CD14-positive monocyte (primary cell): ENCODE measurements at regions of chr19 and their contacts with region 1.

Region 1: GRCh38 chr19:1672038-1672768 is 19.8 kb upstream of the TCF3 start:
- DNase-seq: peak in 1 of 3 donors; percentile 40
- H3K4me3 ChIP-seq: peak overlapping the region in 1 of 3 experiments; percentile 57
- H3K4me3 Mint-ChIP-seq: peak overlapping the region; percentile 31 to 53
- H3K27ac ChIP-seq: no peak overlapping the region
- H3K27ac Mint-ChIP-seq: no peak overlapping the region
- H3K4me1 ChIP-seq: peaks cover 17 to 23% of the 10 kb centered on the region in 2 donors
- H3K4me1 Mint-ChIP-seq: peaks cover 18% of the 10 kb centered on the region
- H3K27me3 ChIP-seq: peaks cover 14 to 80% of the 10 kb centered on the region in 2 donors
- H3K27me3 Mint-ChIP-seq: peaks cover 64 to 93% (median 64%) of the 10 kb centered on the region in 3 donors
- CTCF ChIP-seq: peak; percentile 98

Region 2: DNA sequence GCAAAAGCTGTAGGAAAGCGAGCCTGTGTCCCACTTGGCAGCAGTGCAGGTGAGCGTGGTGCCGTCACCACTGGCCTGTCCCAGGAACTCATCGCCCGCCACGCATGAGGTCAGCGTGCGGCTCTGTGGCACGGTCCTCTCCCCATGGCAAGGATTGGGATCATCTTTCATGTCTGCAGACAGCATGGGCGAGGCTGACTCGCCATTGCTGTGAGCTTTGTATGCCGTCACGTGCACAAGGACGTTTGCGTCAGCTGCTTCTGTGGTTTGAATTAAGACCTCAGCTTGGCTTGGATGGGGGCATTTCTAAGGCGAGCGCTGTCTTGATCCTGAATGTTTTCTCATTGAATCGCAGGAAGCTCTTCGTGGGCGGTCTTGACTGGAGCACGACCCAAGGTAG is 255.1 kb before region 1 on chr19:
- intact Hi-C with region 1: no loop called
- DNase-seq: no peak
- H3K4me3 ChIP-seq: no peak overlapping the region
- H3K4me3 Mint-ChIP-seq: no peak overlapping the region
- H3K27ac ChIP-seq: peak overlapping the region in 1 of 2 donors; percentile 78
- H3K27ac Mint-ChIP-seq: peak overlapping the region in 4 of 7 donors; percentile 10 to 69 (median 30)
- H3K4me1 ChIP-seq: peaks cover 19 to 21% of the 10 kb centered on the region in 2 donors
- H3K4me1 Mint-ChIP-seq: peaks cover 24% of the 10 kb centered on the region
- H3K27me3 ChIP-seq: no peaks in the 10 kb centered on the region
- H3K27me3 Mint-ChIP-seq: peaks cover 0 to 1% (median 0%) of the 10 kb centered on the region in 3 donors
- CTCF ChIP-seq: no peak

Region 3: DNA sequence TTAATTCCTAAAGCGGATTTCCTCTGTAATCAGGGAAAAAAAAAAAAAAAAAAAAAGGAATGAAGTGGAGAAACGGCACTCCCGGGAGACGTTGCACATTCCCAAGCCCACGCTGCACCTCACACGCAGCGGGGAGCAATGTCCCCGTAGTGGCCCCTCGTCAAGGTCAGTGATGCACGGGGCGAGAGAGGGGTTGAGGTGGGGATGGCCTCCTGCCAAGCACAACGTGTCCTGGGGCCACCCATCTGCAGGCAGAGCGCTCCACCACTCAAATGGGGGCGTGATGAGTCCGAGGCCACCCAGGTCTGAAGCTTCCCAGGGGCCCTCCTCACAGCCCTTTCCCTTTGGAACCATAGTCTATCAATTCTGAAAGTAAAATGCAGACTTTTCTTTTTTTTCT is 133.2 kb before region 1 on chr19:
- intact Hi-C with region 1: no loop called
- DNase-seq: no peak
- H3K4me3 ChIP-seq: no peak overlapping the region
- H3K4me3 Mint-ChIP-seq: no peak overlapping the region
- H3K27ac ChIP-seq: no peak overlapping the region
- H3K27ac Mint-ChIP-seq: no peak overlapping the region
- H3K4me1 ChIP-seq: no peaks in the 10 kb centered on the region
- H3K4me1 Mint-ChIP-seq: no peaks in the 10 kb centered on the region
- H3K27me3 ChIP-seq: peaks cover 0 to 7% of the 10 kb centered on the region in 2 donors
- H3K27me3 Mint-ChIP-seq: peaks cover 23 to 42% (median 24%) of the 10 kb centered on the region in 3 donors
- CTCF ChIP-seq: no peak

Region 4: DNA sequence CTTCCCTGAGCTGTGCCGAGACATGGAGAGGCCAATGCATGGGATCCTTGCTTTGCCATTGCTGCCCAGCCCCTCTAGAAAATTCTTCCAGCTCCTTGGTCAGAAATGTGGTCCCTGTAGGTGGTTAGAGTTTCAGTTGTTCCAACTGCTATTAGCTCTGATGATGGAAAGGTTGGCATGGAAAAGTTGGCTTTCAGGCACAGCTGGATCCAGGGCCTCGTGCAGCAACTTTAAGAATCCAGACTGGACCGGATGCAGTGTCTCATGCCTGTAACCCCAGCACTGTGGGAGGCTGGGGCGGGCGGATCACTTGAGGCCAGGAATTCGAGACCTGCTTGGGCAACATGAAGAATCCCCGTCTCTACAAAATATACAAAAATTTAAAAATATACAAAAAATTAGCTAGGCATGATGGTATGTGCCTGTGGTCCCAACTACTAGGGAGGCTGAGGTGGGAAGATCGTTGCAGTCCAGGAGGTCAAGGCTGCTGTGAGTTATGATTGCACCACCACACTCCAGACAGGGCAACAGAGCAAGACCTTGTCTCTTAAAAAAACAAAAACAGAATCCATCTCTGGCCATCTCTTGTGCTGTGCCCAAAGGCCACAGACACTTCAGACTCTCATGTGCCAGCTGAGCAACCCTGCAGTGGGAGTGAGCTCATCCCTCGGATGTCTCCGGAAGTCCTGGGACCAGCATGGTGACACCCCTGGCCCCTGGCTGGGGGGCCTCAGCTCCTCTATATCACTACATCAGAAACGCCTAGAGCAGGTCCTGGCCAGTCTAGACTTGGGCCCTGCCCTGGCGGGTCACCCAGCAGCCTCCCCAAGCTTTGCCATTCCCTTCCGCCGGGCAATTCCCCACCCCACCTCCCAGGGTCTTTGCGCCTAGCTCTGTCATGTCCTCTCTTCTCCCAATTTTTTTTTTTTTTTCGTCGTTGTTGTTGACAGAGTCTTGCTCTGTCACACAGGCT is 120.8 kb before region 1 on chr19:
- intact Hi-C with region 1: loop called (anchors 5 kb)
- DNase-seq: no peak
- H3K4me3 ChIP-seq: no peak overlapping the region
- H3K4me3 Mint-ChIP-seq: no peak overlapping the region
- H3K27ac ChIP-seq: no peak overlapping the region
- H3K27ac Mint-ChIP-seq: no peak overlapping the region
- H3K4me1 ChIP-seq: no peaks in the 10 kb centered on the region
- H3K4me1 Mint-ChIP-seq: peaks cover 1% of the 10 kb centered on the region
- H3K27me3 ChIP-seq: no peaks in the 10 kb centered on the region
- H3K27me3 Mint-ChIP-seq: peaks cover 10 to 17% (median 14%) of the 10 kb centered on the region in 3 donors
- CTCF ChIP-seq: no peak